ENCODE measurements at regions of chr12 and their contacts with region 1.

Region 1: GRCh38 chr12:65209655-65210043 is 40.3 kb downstream of the LEMD3 start:
- DNase-seq: no peak
- H3K4me3 Mint-ChIP-seq: peak overlapping the region; percentile 51
- H3K27ac Mint-ChIP-seq: peak overlapping the region; percentile 87
- H3K4me1 Mint-ChIP-seq: peaks cover 44% of the 10 kb centered on the region
- H3K27me3 Mint-ChIP-seq: no peaks in the 10 kb centered on the region

Region 2: GRCh38 chr12:65192963-65193516 is 16.6 kb before region 1 on chr12:
- CTCF ChIA-PET with region 1: interaction called, 5 read pairs
- POLR2A ChIA-PET with region 1: interaction called, 11 read pairs
- DNase-seq: no peak
- H3K4me3 Mint-ChIP-seq: no peak overlapping the region
- H3K27ac Mint-ChIP-seq: no peak overlapping the region
- H3K4me1 Mint-ChIP-seq: peaks cover 59% of the 10 kb centered on the region
- H3K27me3 Mint-ChIP-seq: no peaks in the 10 kb centered on the region

Region 3: GRCh38 chr12:65257986-65258385 is 48.3 kb after region 1 on chr12:
- CTCF ChIA-PET with region 1: no interaction called
- POLR2A ChIA-PET with region 1: no interaction called
- DNase-seq: no peak
- H3K4me3 Mint-ChIP-seq: no peak overlapping the region
- H3K27ac Mint-ChIP-seq: no peak overlapping the region
- H3K4me1 Mint-ChIP-seq: no peaks in the 10 kb centered on the region
- H3K27me3 Mint-ChIP-seq: peaks cover 9% of the 10 kb centered on the region

Region 4: DNA sequence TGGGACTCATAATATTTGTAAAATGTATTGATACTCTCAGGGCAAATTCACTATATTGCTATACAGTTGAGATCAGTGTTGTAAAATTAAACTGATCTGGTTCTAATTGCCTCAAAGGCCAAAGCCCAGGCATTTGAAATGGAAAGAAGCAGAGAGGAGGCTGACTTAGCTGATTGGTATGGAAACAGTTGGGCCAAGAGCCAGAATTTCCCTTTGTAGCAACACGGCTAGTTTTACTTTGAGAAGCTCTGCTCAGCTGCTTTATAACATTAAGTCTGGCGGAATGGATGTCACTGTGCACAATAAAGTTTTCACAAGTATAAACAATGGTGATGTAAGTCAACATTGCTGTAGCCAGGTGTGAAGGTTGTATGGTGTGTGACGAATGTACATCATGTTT is 255.3 kb after region 1 on chr12:
- CTCF ChIA-PET with region 1: no interaction called
- POLR2A ChIA-PET with region 1: no interaction called
- DNase-seq: no peak
- H3K4me3 Mint-ChIP-seq: no peak overlapping the region
- H3K27ac Mint-ChIP-seq: no peak overlapping the region
- H3K4me1 Mint-ChIP-seq: no peaks in the 10 kb centered on the region
- H3K27me3 Mint-ChIP-seq: no peaks in the 10 kb centered on the region

Measured in activated CD4-positive, alpha-beta memory T cell treated with anti-CD3 and anti-CD28 coated beads, Interleukin-2, amount 10 ng/mL, durations not matched to agents 7 days and 5 days (primary cell).